ENCODE measurements at regions of chr12 and their contacts with region 1.

Region 1: DNA sequence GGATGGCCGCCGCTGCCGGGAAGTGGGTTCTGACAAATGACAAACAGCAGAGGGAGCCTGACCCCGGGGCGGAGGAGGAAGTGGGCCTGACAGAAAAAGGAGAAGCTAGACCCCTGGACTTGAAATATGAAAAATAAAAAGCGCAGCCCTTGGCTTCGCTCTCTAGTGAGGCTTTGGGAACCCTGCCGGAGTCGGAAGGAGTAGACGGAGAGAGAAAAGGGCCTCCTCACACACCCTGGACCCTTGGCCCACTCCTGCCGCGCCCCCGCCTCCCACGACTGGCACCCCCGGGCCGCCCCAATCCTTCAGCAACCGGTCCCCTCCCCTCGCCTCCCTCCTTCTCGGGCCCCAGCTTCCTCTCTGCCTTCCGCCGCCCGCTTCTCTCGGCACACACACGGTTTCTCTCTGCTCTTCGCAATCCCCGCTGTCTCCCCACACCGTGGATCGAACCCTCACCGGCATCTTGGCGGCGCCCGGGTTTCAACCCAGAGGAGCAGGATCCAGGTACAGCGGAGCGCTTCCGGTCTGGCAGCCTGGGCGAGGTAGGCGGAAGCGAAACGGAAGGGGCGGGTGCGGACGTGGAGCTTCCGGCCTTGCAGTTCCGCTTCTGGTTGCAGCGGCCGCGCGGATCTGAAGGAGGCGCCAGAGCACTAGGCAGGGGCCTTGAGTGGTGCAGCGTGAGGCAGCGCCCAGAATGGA is at the start of gene ARPC3:
- DNase-seq: peak; percentile 93
- H3K4me3 ChIP-seq: peak within 1 kb of the TSS; percentile 62 to 100 (median 94)
- H3K27ac ChIP-seq: peak within 1 kb of the TSS; percentile 61
- H3K4me1 ChIP-seq: no peaks in the 10 kb centered on the region
- H3K27me3 ChIP-seq: no peaks in the 10 kb centered on the region
- CTCF ChIP-seq: peak; percentile 80 to 95
- total RNA-seq, gene ARPC3: 290 to 318 TPM

Region 2: GRCh38 chr12:110431957-110432587 is 17.9 kb before region 1 on chr12:
- CTCF ChIA-PET with region 1: interaction called, 10 read pairs
- dilution Hi-C with region 1: no loop called
- in situ Hi-C with region 1: no loop called
- intact Hi-C with region 1: no loop called
- DNase-seq: no peak
- H3K4me3 ChIP-seq: no peak overlapping the region
- H3K27ac ChIP-seq: no peak overlapping the region
- H3K4me1 ChIP-seq: no peaks in the 10 kb centered on the region
- H3K27me3 ChIP-seq: no peaks in the 10 kb centered on the region
- CTCF ChIP-seq: no peak

Region 3: GRCh38 chr12:110468212-110469048 is 18.5 kb after region 1 on chr12 and contains the starts of genes FAM216A and GPN3:
- CTCF ChIA-PET with region 1: interaction called, 6 read pairs
- dilution Hi-C with region 1: no loop called
- in situ Hi-C with region 1: no loop called
- intact Hi-C with region 1: loop called (anchors 1 kb)
- DNase-seq: peak; percentile 99
- H3K4me3 ChIP-seq: peak within 1 kb of the TSS; percentile 71 to 85 (median 83)
- H3K27ac ChIP-seq: peak within 1 kb of the TSS; percentile 86
- H3K4me1 ChIP-seq: peaks cover 13% of the 10 kb centered on the region
- H3K27me3 ChIP-seq: no peaks in the 10 kb centered on the region
- CTCF ChIP-seq: no peak
- total RNA-seq, gene FAM216A: 5.2 to 13.5 TPM
- total RNA-seq, gene GPN3: 12.3 to 19.5 TPM

Region 4: GRCh38 chr12:110501752-110502738 is 52.1 kb after region 1 on chr12 and contains the starts of genes RAD9B and VPS29:
- CTCF ChIA-PET with region 1: no interaction called
- dilution Hi-C with region 1: no loop called
- in situ Hi-C with region 1: no loop called
- intact Hi-C with region 1: loop called (anchors 5 kb)
- DNase-seq: peak; percentile 99
- H3K4me3 ChIP-seq: peak within 1 kb of the TSS; percentile 84 to 94 (median 92)
- H3K27ac ChIP-seq: peak within 1 kb of the TSS; percentile 96
- H3K4me1 ChIP-seq: peaks cover 17% of the 10 kb centered on the region
- H3K27me3 ChIP-seq: no peaks in the 10 kb centered on the region
- CTCF ChIP-seq: no peak
- total RNA-seq, gene RAD9B: 1.1 to 2.5 TPM
- total RNA-seq, gene VPS29: 56.3 to 130 TPM

Region 5: DNA sequence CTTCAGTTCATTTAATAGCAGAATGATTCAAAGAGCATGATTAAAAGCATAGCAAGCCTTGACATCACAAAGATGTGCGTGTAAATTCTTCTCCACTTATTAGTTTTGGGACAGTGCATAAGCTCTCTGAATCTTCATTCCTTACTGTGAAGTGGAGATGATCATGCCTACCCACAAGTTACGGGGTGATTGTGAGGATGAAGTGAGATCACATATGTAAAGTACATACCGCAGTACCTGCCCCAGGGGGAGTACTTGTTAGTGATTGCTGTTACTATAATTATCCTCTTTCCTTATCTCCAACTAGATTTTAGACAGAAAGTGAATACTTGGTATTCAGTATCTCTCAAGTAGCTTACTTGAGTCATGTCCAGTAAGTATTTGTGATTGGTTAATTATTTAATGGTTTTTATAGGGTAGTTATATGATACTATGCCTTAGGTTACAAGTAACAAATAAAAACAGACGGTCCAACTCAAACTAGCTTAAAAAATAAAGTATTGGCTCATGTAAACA is 58.2 kb after region 1 on chr12:
- CTCF ChIA-PET with region 1: no interaction called
- dilution Hi-C with region 1: no loop called
- in situ Hi-C with region 1: no loop called
- intact Hi-C with region 1: loop called (anchors 1 kb)
- DNase-seq: no peak
- H3K4me3 ChIP-seq: no peak overlapping the region
- H3K27ac ChIP-seq: no peak overlapping the region
- H3K4me1 ChIP-seq: no peaks in the 10 kb centered on the region
- H3K27me3 ChIP-seq: no peaks in the 10 kb centered on the region
- CTCF ChIP-seq: no peak

Region 6: DNA sequence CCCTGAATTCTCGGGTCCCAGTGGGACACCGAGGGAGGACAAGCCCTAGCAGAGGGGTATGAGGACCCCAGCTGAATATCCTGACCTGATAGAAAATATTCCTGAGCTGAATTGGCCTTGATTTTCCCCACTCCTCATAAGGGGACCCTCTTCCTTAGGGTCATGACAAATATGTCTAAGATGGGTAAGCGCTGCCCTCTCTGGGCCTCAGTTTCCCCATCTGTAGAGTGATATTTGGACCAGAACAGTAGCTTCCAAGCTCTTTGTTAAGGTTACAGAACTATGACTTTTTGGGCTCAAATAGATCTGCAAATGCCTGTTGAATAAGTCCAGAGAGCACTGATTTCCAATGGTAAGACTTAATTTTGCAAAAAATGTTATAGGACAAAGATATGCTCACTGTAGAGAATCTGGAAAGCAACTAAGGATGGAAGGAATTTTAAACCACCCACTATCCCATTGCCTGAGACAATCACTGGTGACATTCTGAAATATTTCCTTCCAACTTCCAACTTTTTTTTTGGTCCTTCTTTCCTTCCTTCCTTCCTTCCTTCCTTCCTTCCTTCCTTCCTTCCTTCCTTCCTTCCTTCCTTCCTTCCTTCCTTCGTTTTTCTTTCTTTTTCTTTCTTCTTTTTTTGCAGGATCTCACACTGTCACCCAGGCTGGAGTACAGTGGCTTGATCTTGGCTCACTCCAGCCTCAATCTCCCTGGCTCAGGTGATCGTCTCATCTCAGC is 438.5 kb after region 1 on chr12:
- CTCF ChIA-PET with region 1: interaction called, 5 read pairs
- dilution Hi-C with region 1: no loop called
- in situ Hi-C with region 1: no loop called
- intact Hi-C with region 1: loop called (anchors 1 kb)
- DNase-seq: no peak
- H3K4me3 ChIP-seq: no peak overlapping the region
- H3K27ac ChIP-seq: no peak overlapping the region
- H3K4me1 ChIP-seq: peaks cover 9% of the 10 kb centered on the region
- H3K27me3 ChIP-seq: no peaks in the 10 kb centered on the region
- CTCF ChIP-seq: no peak